ENCODE measurements at regions of chr3 and their contacts with region 1.

Region 1: GRCh38 chr3:160754855-160755747 is 930 bp upstream of the PPM1L start:
- DNase-seq: peak; percentile 89 to 92
- H3K4me3 ChIP-seq: peak overlapping the region; percentile 63
- H3K4me3 Mint-ChIP-seq: peak overlapping the region; percentile 85
- H3K27ac Mint-ChIP-seq: peak overlapping the region; percentile 90
- H3K4me1 ChIP-seq: peaks cover 11% of the 10 kb centered on the region
- H3K4me1 Mint-ChIP-seq: no peaks in the 10 kb centered on the region
- H3K27me3 ChIP-seq: no peaks in the 10 kb centered on the region; the same call in 1 of the 2 replicates
- H3K27me3 Mint-ChIP-seq: peaks cover 11% of the 10 kb centered on the region
- CTCF ChIP-seq: no peak

Region 2: DNA sequence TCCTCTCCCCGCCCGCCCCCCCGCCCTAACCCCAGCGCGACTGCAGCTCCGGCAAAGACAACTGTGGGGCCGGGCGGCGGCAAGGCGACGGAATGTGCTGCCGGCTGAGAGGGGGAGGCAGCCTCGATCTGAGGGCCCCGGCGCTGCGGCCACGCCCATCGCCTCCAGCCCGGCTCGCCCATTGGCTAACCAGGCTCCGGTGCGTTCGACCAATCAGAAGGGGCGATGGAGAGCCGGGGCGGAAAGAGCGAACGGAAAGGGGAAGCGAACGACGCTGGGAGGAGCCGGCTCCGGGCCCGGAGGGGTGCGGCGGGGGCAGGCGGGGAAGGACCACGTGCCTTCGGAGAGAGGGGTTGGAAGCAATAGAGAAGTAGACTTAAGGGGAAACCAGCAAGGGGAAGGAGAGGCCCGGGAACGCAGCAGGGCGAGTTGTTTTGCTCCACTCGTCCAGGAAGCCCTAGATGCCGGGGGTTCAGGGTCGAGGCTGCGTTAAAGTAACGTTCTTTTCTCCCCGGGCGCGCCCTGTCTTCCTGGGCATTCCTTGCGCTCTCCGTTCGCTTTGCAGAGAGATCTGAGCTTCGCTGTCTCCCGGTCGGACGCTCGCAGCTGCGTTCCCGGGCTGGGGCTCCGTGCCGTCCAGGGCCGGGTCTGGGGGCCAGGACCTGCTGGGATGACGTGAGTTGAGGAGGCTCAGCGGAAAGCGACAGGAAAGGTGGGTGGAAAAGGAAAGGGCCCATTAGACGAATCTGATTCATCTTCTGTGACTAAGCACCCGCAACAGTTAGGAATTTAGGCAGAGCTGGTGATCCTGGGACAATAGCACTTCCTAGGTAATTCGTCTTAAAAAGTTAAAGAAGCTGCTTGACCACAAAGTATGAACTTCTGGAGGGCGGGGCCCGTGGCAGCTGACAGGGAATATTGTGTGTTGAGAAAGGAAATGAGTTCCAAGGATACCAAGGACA is 189.4 kb before region 1 on chr3 and contains the start of gene KPNA4:
- CTCF ChIA-PET with region 1: no interaction called
- POLR2A ChIA-PET with region 1: no interaction called
- intact Hi-C with region 1: loop called (anchors 10 kb)
- DNase-seq: peak; percentile 97 to 98
- H3K4me3 ChIP-seq: peak within 1 kb of the TSS; percentile 50
- H3K4me3 Mint-ChIP-seq: peak within 1 kb of the TSS; percentile 88
- H3K27ac Mint-ChIP-seq: peak within 1 kb of the TSS; percentile 90
- H3K4me1 ChIP-seq: peaks cover 6% of the 10 kb centered on the region
- H3K4me1 Mint-ChIP-seq: peaks cover 16% of the 10 kb centered on the region
- H3K27me3 ChIP-seq: no peaks in the 10 kb centered on the region
- H3K27me3 Mint-ChIP-seq: no peaks in the 10 kb centered on the region
- CTCF ChIP-seq: no peak
- total RNA-seq, gene KPNA4: 53.5 and 60.5 TPM in 2 replicates

Region 3: DNA sequence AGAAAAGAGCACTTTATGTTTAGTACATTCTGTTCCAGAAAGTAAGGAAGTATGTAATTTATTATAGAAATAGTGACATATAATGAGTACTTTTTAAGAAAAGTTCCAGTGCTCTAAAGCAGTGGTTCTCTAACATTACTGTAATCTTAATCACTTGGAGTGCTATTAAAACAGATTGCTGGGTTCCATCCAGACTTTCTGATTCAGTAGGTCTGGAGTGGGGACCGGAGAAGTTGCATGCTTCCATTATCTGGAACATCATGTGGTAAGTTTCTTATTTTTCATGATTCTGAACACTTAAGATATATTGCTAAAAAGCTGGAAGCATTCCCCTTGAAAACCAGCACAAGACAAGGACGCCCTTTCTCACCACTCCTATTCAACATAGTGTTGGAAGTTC is 125.6 kb before region 1 on chr3:
- CTCF ChIA-PET with region 1: no interaction called
- POLR2A ChIA-PET with region 1: no interaction called
- intact Hi-C with region 1: no loop called
- DNase-seq: no peak
- H3K4me3 ChIP-seq: no peak overlapping the region
- H3K4me3 Mint-ChIP-seq: no peak overlapping the region
- H3K27ac Mint-ChIP-seq: no peak overlapping the region
- H3K4me1 ChIP-seq: no peaks in the 10 kb centered on the region
- H3K4me1 Mint-ChIP-seq: no peaks in the 10 kb centered on the region
- H3K27me3 ChIP-seq: no peaks in the 10 kb centered on the region; the same call in none of the 2 replicates
- H3K27me3 Mint-ChIP-seq: peaks cover 2% of the 10 kb centered on the region
- CTCF ChIP-seq: no peak

Region 4: GRCh38 chr3:160686955-160687535 is 68.1 kb before region 1 on chr3:
- CTCF ChIA-PET with region 1: no interaction called
- POLR2A ChIA-PET with region 1: no interaction called
- intact Hi-C with region 1: loop called (anchors 2 kb)
- DNase-seq: no peak
- H3K4me3 ChIP-seq: no peak overlapping the region
- H3K4me3 Mint-ChIP-seq: no peak overlapping the region
- H3K27ac Mint-ChIP-seq: no peak overlapping the region
- H3K4me1 ChIP-seq: peaks cover 9% of the 10 kb centered on the region; the same call in 1 of the 2 replicates
- H3K4me1 Mint-ChIP-seq: peaks cover 7% of the 10 kb centered on the region
- H3K27me3 ChIP-seq: no peaks in the 10 kb centered on the region
- H3K27me3 Mint-ChIP-seq: no peaks in the 10 kb centered on the region
- CTCF ChIP-seq: peak; percentile 38 to 39

Region 5: GRCh38 chr3:160739079-160739478 is 16.0 kb before region 1 on chr3:
- CTCF ChIA-PET with region 1: no interaction called
- POLR2A ChIA-PET with region 1: no interaction called
- intact Hi-C with region 1: no loop called
- DNase-seq: no peak
- H3K4me3 ChIP-seq: no peak overlapping the region
- H3K4me3 Mint-ChIP-seq: no peak overlapping the region
- H3K27ac Mint-ChIP-seq: no peak overlapping the region
- H3K4me1 ChIP-seq: no peaks in the 10 kb centered on the region
- H3K4me1 Mint-ChIP-seq: no peaks in the 10 kb centered on the region
- H3K27me3 ChIP-seq: no peaks in the 10 kb centered on the region
- H3K27me3 Mint-ChIP-seq: peaks cover 11% of the 10 kb centered on the region
- CTCF ChIP-seq: no peak

Region 6: DNA sequence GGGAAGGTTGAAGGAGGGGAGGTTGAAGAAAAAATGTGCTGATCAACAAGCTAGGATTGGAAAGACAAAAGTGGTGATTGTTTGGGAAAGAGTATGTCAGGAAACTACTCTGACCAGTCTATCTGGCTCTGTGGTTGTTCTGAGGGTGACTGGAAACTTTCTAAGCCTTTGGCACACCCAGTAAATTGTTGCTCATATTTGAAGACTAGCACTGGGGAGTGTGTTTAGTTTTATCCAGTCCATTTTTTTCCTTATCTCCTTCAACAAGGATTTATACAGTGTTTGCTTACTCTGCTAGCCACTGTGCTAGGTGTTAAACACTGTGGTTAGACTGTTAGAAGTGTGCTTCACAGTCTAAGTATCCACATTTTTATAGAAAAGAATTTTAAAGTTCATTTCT is 29.7 kb after region 1 on chr3:
- CTCF ChIA-PET with region 1: no interaction called
- POLR2A ChIA-PET with region 1: no interaction called
- intact Hi-C with region 1: loop called (anchors 2 kb)
- DNase-seq: peak in 1 of 2 experiments; percentile 40
- H3K4me3 ChIP-seq: no peak overlapping the region
- H3K4me3 Mint-ChIP-seq: no peak overlapping the region
- H3K27ac Mint-ChIP-seq: no peak overlapping the region
- H3K4me1 ChIP-seq: peaks cover 6% of the 10 kb centered on the region
- H3K4me1 Mint-ChIP-seq: peaks cover 7% of the 10 kb centered on the region
- H3K27me3 ChIP-seq: no peaks in the 10 kb centered on the region
- H3K27me3 Mint-ChIP-seq: no peaks in the 10 kb centered on the region
- CTCF ChIP-seq: no peak

Region 7: DNA sequence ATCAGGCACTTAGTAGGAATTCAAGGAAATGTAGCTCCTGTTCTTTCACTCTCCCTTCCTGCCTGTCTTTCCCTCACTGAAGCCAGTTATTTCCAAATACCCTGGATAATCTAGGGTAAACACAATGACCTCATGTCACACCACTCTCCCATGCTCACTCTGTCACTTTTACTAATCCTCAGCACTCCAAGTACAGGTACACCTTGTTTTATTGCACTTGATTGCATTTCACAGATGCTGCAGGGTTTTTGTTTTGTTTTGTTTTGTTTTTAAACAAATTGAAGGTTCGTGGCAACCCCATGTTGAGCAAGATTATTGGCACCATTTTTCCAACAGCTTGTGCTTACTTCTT is 41.7 kb after region 1 on chr3:
- CTCF ChIA-PET with region 1: no interaction called
- POLR2A ChIA-PET with region 1: no interaction called
- intact Hi-C with region 1: loop called (anchors 2 kb)
- DNase-seq: peak; percentile 50 to 63
- H3K4me3 ChIP-seq: no peak overlapping the region
- H3K4me3 Mint-ChIP-seq: no peak overlapping the region
- H3K27ac Mint-ChIP-seq: peak overlapping the region; percentile 0
- H3K4me1 ChIP-seq: peaks cover 16% of the 10 kb centered on the region
- H3K4me1 Mint-ChIP-seq: peaks cover 21% of the 10 kb centered on the region
- H3K27me3 ChIP-seq: no peaks in the 10 kb centered on the region; the same call in 1 of the 2 replicates
- H3K27me3 Mint-ChIP-seq: peaks cover 20% of the 10 kb centered on the region
- CTCF ChIP-seq: no peak

Region 8: DNA sequence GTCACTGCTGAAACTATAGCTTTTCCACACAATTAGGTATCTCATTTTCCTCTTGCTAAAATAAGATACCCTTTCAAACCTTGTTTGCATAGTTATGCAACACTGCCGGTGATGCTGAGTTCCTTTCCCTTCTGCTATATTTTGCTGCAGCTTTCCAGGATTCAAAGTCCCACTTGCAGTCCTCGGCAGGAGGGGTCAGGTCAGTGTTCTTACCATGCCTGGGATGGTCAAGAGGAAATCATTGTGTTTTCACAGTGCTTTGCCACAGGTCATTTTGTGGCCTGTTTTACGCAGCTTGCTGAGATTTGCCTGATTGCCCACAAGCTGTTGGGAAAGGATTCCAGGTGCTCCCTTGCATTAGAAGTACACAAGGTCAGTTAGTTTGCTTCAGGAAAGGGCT is 193.2 kb after region 1 on chr3:
- CTCF ChIA-PET with region 1: no interaction called
- POLR2A ChIA-PET with region 1: no interaction called
- intact Hi-C with region 1: loop called (anchors 5 kb)
- DNase-seq: peak; percentile 57 to 70
- H3K4me3 ChIP-seq: no peak overlapping the region
- H3K4me3 Mint-ChIP-seq: no peak overlapping the region
- H3K27ac Mint-ChIP-seq: no peak overlapping the region
- H3K4me1 ChIP-seq: no peaks in the 10 kb centered on the region; the same call in 1 of the 2 replicates
- H3K4me1 Mint-ChIP-seq: no peaks in the 10 kb centered on the region
- H3K27me3 ChIP-seq: no peaks in the 10 kb centered on the region
- H3K27me3 Mint-ChIP-seq: peaks cover 4% of the 10 kb centered on the region
- CTCF ChIP-seq: no peak

Region 9: DNA sequence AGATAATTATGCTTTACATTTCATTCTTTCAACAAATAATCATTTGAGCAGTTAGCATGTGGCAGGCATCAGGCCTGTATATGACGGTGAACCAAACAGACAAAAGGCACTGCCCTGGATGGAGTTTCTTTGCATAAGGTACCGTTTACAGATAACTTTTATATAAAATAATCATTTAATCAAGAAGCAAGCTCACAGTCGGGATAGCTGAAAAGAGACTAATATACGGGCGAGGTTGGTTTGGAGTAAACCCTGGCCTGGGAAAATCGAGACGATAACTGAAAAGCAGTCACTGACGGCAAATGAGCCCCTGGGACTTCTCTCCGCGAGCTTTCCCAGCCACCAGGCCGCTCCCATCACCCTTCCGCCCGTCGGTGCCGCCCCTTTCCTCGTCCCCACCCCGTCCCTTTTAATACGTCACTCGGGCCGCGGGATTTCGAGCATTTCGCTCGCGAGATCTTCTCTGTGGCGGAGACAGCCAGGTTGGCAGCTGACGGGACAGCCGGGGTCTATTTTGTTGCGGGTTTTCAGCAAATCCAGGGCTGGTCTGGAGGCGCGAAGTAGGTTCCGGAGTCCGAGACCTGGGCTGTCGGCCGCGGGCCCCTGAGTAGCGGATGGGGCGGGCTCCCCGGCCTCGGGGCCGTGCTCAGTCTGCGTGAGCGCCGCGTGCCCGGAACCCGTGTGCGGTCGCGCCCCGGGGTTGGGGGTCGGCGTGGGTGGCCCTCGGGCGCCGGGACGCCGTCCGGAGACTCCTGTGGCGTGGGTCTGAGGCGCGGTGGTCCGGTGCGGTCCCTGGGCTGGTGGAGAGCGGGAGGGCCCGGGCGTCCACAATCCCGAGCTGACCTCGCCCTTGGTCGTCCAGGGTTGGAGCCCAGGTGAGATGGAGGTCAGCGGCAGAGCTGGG is 466.0 kb after region 1 on chr3 and contains the start of gene NMD3:
- CTCF ChIA-PET with region 1: no interaction called
- POLR2A ChIA-PET with region 1: no interaction called
- intact Hi-C with region 1: loop called (anchors 1 kb)
- DNase-seq: peak; percentile 95
- H3K4me3 ChIP-seq: peak within 1 kb of the TSS; percentile 86
- H3K4me3 Mint-ChIP-seq: peak within 1 kb of the TSS; percentile 80
- H3K27ac Mint-ChIP-seq: peak within 1 kb of the TSS; percentile 81
- H3K4me1 ChIP-seq: peaks cover 6% of the 10 kb centered on the region; the same call in 1 of the 2 replicates
- H3K4me1 Mint-ChIP-seq: peaks cover 6% of the 10 kb centered on the region
- H3K27me3 ChIP-seq: no peaks in the 10 kb centered on the region
- H3K27me3 Mint-ChIP-seq: no peaks in the 10 kb centered on the region
- CTCF ChIP-seq: no peak
- total RNA-seq, gene NMD3: 61.7 and 62.4 TPM in 2 replicates